ENCODE measurements at regions of chr10 and their contacts with region 1.

Region 1: GRCh38 chr10:61140765-61141392 is 196.9 kb upstream of the RHOBTB1 start:
- DNase-seq: peak; percentile 24
- H3K4me3 ChIP-seq: no peak overlapping the region
- H3K27me3 ChIP-seq: no peaks in the 10 kb centered on the region; the same call in 1 of the 2 replicates
- CTCF ChIP-seq: peak; percentile 62

Region 2: DNA sequence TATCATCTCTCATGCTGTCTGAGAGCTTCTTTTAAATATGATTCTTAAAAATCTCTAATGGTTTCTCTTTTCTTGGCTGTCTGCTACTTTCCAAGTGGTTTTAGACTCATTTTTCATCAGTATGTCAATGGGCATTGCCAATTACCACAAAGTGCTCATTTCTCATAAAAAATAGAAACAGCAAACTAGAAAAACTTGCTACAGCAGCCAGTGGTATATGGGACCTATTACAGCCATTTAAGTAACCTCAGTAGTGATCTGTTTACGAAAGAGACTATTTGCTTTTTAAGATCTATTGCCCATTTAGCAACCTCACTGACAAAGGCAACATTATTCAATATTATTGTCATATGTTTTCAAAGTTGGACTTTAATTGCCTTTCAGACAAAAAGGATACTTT is 10.2 kb after region 1 on chr10:
- CTCF ChIA-PET with region 1: interaction called, 23 read pairs
- POLR2A ChIA-PET with region 1: no interaction called
- DNase-seq: no peak
- H3K4me3 ChIP-seq: no peak overlapping the region
- H3K27me3 ChIP-seq: no peaks in the 10 kb centered on the region
- CTCF ChIP-seq: no peak

Region 3: GRCh38 chr10:61176424-61176823 is 35.5 kb after region 1 on chr10:
- CTCF ChIA-PET with region 1: interaction called, 12 read pairs
- POLR2A ChIA-PET with region 1: no interaction called
- DNase-seq: no peak
- H3K4me3 ChIP-seq: no peak overlapping the region
- H3K27me3 ChIP-seq: no peaks in the 10 kb centered on the region
- CTCF ChIP-seq: no peak

Region 4: DNA sequence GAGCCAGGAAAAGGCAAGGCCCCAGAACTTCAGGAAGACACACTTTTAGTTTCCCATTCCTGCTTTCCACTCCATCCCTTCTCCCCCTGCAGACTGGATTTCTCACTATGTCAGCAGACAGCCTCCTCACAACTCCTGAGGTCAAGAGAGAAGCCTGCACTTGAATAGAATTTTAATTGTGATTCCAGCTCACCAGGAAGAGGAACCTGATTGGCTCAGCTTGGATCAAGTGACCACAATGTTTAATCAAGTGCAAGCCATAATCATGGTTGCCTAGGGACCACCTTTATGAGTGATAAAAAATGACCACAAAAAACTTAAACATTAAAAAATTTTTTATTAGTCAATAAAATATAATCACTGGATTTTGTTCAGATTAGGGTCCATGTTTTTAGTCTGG is 47.8 kb after region 1 on chr10:
- CTCF ChIA-PET with region 1: interaction called, 21 read pairs
- POLR2A ChIA-PET with region 1: no interaction called
- DNase-seq: no peak
- H3K4me3 ChIP-seq: no peak overlapping the region
- H3K27me3 ChIP-seq: no peaks in the 10 kb centered on the region; the same call in 1 of the 2 replicates
- CTCF ChIP-seq: no peak

Region 5: GRCh38 chr10:61248013-61248412 is 107.1 kb after region 1 on chr10:
- CTCF ChIA-PET with region 1: no interaction called
- POLR2A ChIA-PET with region 1: no interaction called
- DNase-seq: no peak
- H3K4me3 ChIP-seq: no peak overlapping the region
- H3K27me3 ChIP-seq: peaks cover 4% of the 10 kb centered on the region
- CTCF ChIP-seq: no peak